Posterior vena cava (tissue), 2 donors: ENCODE measurements at regions of chr7 and their contacts with region 1.

Region 1: DNA sequence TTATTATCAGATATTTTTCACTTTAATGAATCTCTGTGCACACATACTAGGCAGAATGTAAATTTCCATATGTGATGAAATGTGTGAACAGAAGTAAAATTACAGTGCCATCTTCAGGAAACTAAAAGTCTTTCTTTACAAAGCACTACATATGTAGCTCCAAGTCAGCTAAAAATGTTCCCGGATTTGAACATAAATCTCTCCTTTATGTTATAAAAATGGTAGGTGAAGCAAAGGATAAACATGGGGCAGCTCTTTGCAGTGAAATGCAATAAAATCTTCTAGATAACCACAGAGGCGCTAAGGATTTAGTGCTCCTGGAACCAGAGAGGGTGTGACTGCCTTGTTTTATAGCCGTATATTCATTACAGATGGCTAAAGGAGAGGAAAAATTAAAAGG is 104.9 kb upstream of the C7orf33 start:
- DNase-seq: no peak

Region 2: GRCh38 chr7:147721962-147722830 is 763.4 kb before region 1 on chr7:
- intact Hi-C with region 1: no loop called
- DNase-seq: no peak

Region 3: DNA sequence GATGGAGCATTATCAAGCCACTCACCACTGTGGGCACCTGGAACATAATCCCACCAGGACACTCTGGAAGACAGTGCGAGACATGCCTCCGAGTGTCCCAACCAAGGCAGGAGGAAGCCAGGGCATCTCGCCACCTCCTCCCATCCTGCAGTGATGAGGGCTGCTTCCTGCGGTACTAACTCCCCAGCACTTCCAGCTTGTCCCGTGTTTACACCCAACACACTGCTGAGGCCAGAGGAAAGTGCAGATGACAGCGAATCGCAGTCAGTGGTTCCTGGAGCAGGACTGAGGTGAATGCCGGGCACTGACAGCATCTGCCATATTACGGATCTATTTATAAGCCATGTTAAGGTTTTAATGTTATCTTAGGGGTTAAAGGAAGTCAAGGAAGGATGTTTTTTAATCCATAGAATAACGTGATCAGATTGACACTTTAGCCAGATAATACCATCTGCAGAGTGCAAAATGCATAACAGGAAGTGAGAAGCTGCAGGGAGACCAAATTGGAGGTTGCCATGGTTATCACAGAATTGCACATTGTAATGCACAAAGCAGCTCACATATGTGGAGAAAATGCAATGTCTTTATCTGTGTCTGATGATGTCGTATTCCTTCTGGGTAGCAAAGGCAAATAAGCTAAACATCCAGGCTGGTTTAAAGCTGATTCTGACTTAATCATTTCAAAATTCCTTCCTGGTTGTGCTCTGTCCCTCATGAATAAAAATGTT is 209.1 kb before region 1 on chr7:
- intact Hi-C with region 1: loop called in 1 of 2 experiments (anchors 10 kb)
- DNase-seq: no peak

Region 4: DNA sequence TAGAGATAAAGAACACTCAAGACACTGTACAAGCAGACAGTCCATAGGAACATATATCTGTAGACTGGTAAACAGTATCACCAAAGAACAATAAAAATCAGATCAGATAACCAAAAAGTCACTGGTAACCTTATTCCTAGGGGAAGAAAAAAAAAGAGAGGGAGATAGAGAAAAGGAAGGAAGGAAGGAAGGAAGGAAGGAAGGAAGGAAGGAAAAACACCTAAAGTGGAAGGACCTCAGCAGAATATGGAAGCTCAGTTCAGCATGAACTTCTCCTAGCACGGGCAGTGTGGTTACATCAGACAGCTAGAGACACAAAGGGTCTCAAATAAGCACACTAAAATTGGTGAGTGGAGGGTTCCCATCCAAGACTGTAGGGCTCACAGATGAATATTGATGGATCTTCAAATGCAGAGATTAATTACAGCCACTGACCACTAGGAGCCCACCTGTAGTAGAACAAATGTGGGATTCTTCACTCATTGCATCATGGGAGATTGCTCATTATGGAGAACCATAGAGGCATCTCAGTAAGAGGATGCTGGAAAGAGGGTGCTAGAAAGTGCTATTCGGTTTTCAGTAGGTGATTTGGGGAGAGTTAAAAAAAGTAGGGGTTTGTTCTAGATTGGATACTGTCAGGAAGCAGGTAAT is 188.5 kb before region 1 on chr7:
- intact Hi-C with region 1: no loop called
- DNase-seq: no peak

Region 5: DNA sequence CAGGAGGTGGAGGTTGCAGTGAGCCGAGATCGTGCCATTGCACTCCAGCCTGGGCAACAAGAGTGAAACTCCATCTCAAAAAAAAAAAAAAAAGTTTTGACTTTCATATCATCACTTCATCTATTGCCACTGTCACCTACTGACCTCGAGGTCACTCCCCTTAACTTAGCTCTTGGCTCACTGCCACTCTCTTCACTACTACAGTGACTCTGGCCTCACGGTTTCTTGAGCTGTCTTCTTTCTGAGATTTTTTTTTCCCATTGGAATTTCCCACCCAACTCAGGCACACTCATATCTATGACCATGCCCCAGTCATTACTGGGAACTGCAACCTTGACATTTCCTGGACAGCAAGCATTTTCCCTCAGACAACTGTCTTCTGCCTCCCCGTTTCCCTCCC is 62.3 kb after region 1 on chr7:
- intact Hi-C with region 1: no loop called
- DNase-seq: no peak